SK-N-SH (cell line): ENCODE measurements at regions of chr5 and their contacts with region 1.

Region 1: DNA sequence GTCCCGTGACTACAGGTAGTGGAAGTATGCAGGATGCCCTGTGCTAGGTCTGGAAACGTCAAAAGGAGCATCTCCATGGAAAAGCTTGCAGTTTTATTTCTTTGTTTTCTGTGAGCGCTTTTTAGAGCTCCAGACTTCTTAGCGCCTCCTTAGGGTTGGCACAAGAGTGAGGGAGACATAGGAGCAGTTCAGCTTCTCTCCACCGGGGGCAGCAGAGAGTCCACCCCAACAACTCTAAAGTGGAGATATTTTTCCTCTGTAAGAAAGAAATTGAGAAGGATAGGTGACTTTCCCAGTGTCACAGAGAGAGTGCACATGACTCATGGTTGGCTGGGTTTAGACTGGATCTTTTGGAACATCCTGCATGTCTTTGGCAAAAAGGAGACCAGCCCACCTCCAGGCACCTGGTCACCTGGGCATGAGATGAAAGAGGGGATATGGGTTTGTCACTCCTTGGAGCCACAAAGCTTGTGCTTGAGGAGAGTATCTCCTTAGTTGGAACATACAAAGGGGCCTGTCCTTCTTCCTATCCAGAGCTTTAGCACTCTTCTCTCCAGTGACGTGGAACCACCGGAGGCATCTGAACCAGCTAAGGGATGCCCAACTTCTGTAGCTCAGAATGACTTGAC is 637.7 kb downstream of the SEMA5A start:
- DNase-seq: peak; percentile 41
- H3K4me3 ChIP-seq: peak overlapping the region in 1 of 2 experiments; percentile 32; a peak in 1 of 4 replicates
- H3K27ac ChIP-seq: peak overlapping the region in 1 of 2 experiments; percentile 73; a peak in 2 of 4 replicates
- H3K4me1 ChIP-seq: peaks cover 0 to 4% of the 10 kb centered on the region in 2 experiments; a peak in 2 of 4 replicates
- H3K27me3 ChIP-seq: no peaks in the 10 kb centered on the region
- CTCF ChIP-seq: peak; percentile 87
- EP300 ChIP-seq: no peak
- RAD21 ChIP-seq: peak; percentile 53

Region 2: DNA sequence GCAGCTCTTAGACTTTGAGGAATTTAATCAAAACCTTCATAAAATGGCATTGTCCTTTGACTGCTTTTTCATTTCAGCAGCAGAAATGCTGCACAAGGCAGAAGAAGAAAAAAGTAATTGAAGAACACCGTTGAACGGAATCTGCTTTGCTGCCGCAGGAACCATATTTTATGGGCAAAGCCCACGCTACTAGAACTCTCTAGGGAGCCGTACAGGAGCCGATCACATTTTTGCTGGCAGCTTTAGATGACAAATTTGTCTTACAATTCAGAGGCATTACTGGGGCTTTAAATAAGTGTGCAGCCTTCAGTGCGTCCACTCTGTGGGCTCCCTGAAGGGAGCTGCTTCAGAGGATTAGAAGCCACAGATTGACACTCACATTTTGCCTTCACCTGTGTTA is 1062.6 kb before region 1 on chr5:
- CTCF ChIA-PET with region 1: no interaction called
- POLR2A ChIA-PET with region 1: no interaction called
- DNase-seq: no peak
- H3K4me3 ChIP-seq: no peak overlapping the region
- H3K27ac ChIP-seq: no peak overlapping the region
- H3K4me1 ChIP-seq: peaks cover 0 to 6% of the 10 kb centered on the region in 2 experiments; a peak in 1 of 4 replicates
- H3K27me3 ChIP-seq: peaks cover 37% of the 10 kb centered on the region
- CTCF ChIP-seq: no peak
- EP300 ChIP-seq: no peak
- RAD21 ChIP-seq: no peak

Region 3: DNA sequence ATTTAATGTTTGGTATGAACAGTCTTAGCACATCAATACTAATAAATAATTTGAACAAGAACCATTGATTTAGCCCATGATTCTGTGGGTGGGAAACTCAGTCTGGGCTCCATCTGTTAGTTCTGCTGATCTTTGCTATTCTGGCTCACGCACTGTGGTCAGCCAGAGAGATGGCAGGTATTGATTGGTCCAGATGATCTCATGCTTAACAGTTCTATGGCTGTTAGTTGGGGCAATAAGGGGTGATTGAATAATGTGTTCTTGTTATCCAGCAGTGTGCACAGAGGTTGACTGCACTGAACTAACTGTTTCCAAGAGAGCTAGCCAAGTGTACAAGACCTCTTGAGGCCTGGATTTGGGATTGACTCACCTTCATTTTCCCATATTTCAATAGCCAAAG is 186.6 kb before region 1 on chr5:
- CTCF ChIA-PET with region 1: no interaction called
- POLR2A ChIA-PET with region 1: no interaction called
- DNase-seq: no peak
- H3K4me3 ChIP-seq: no peak overlapping the region
- H3K27ac ChIP-seq: no peak overlapping the region
- H3K4me1 ChIP-seq: no peaks in the 10 kb centered on the region
- H3K27me3 ChIP-seq: no peaks in the 10 kb centered on the region
- CTCF ChIP-seq: no peak
- EP300 ChIP-seq: no peak
- RAD21 ChIP-seq: no peak

Region 4: GRCh38 chr5:8884029-8884428 is 24.1 kb before region 1 on chr5:
- CTCF ChIA-PET with region 1: interaction called, 29 read pairs
- POLR2A ChIA-PET with region 1: no interaction called
- DNase-seq: no peak
- H3K4me3 ChIP-seq: no peak overlapping the region
- H3K27ac ChIP-seq: no peak overlapping the region
- H3K4me1 ChIP-seq: no peaks in the 10 kb centered on the region
- H3K27me3 ChIP-seq: no peaks in the 10 kb centered on the region
- CTCF ChIP-seq: no peak
- EP300 ChIP-seq: no peak
- RAD21 ChIP-seq: no peak

Region 5: GRCh38 chr5:8897316-8897715 is 10.9 kb before region 1 on chr5:
- CTCF ChIA-PET with region 1: interaction called, 10 read pairs
- POLR2A ChIA-PET with region 1: no interaction called
- DNase-seq: no peak
- H3K4me3 ChIP-seq: no peak overlapping the region
- H3K27ac ChIP-seq: no peak overlapping the region
- H3K4me1 ChIP-seq: no peaks in the 10 kb centered on the region
- H3K27me3 ChIP-seq: no peaks in the 10 kb centered on the region; the same call in 1 of the 2 replicates
- CTCF ChIP-seq: no peak
- EP300 ChIP-seq: no peak
- RAD21 ChIP-seq: no peak

Region 6: DNA sequence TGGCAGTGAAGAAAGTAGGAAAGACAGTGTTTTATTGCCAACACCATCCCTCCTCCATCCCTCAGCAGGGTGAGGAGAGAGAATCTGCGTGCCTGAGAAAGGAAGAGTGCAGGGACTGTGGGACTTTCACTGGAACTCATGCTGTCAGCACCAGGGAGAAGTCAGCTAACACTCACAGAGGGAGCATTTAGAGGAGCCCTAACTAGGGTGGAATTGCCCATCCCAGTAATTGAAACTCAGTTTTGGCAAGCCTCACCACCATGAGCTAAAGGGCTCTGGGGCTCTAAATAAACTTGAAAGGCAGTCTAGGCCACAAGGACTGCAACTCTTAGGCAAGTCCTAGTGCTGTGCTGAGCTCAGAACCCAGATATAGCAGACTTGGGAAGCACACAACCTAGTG is 15.4 kb after region 1 on chr5:
- CTCF ChIA-PET with region 1: interaction called, 17 read pairs
- POLR2A ChIA-PET with region 1: no interaction called
- DNase-seq: no peak
- H3K4me3 ChIP-seq: no peak overlapping the region
- H3K27ac ChIP-seq: no peak overlapping the region
- H3K4me1 ChIP-seq: no peaks in the 10 kb centered on the region
- H3K27me3 ChIP-seq: no peaks in the 10 kb centered on the region
- CTCF ChIP-seq: no peak
- EP300 ChIP-seq: no peak
- RAD21 ChIP-seq: no peak